H1 (cell line): ENCODE measurements at regions of chr9 and their contacts with region 1.

Region 1: GRCh38 chr9:129006328-129007034 is 21.6 kb downstream of the SH3GLB2 start:
- DNase-seq: peak; percentile 64 to 74
- H3K4me3 ChIP-seq: no peak overlapping the region
- H3K27ac ChIP-seq: no peak overlapping the region
- H3K4me1 ChIP-seq: no peaks in the 10 kb centered on the region
- H3K27me3 ChIP-seq: no peaks in the 10 kb centered on the region
- CTCF ChIP-seq: peak in 2 of 3 experiments; percentile 96 to 98; a peak in 3 of 4 replicates
- EP300 ChIP-seq: no peak
- POLR2A ChIP-seq: peak in 1 of 2 experiments; percentile 32; a peak in 1 of 3 replicates
- RAD21 ChIP-seq: peak; percentile 54 to 61

Region 2: GRCh38 chr9:128992995-128993394 is 13.5 kb before region 1 on chr9:
- CTCF ChIA-PET with region 1: interaction called, 67 read pairs
- POLR2A ChIA-PET with region 1: interaction called, 11 read pairs
- DNase-seq: no peak
- H3K4me3 ChIP-seq: no peak overlapping the region
- H3K27ac ChIP-seq: no peak overlapping the region
- H3K4me1 ChIP-seq: no peaks in the 10 kb centered on the region
- H3K27me3 ChIP-seq: no peaks in the 10 kb centered on the region
- CTCF ChIP-seq: peak; percentile 29 to 50 (median 37); a peak in 2 of 4 replicates
- EP300 ChIP-seq: no peak
- POLR2A ChIP-seq: no peak
- RAD21 ChIP-seq: peak in 1 of 2 experiments; percentile 43; a peak in 2 of 4 replicates

Region 3: GRCh38 chr9:129023036-129023907 is 16.8 kb after region 1 on chr9:
- CTCF ChIA-PET with region 1: interaction called, 89 read pairs
- POLR2A ChIA-PET with region 1: interaction called, 12 read pairs
- DNase-seq: no peak
- H3K4me3 ChIP-seq: no peak overlapping the region
- H3K27ac ChIP-seq: no peak overlapping the region
- H3K4me1 ChIP-seq: peaks cover 0 to 18% (median 11%) of the 10 kb centered on the region in 4 experiments; a peak in 6 of 7 replicates
- H3K27me3 ChIP-seq: no peaks in the 10 kb centered on the region
- CTCF ChIP-seq: no peak
- EP300 ChIP-seq: no peak
- POLR2A ChIP-seq: no peak
- RAD21 ChIP-seq: no peak

Region 4: GRCh38 chr9:129028192-129028957 is 21.9 kb after region 1 on chr9 and contains the start of gene SH3GLB2:
- CTCF ChIA-PET with region 1: interaction called, 89 read pairs
- POLR2A ChIA-PET with region 1: interaction called, 10 read pairs
- DNase-seq: peak; percentile 89 to 99
- H3K4me3 ChIP-seq: peak within 1 kb of the TSS; percentile 61 to 75 (median 65)
- H3K27ac ChIP-seq: 0 out of 2 replicates have a peak within 1 kb of the TSS, but pooled peaks have one; percentile 40
- H3K4me1 ChIP-seq: peaks cover 0 to 18% (median 11%) of the 10 kb centered on the region in 4 experiments; a peak in 6 of 7 replicates
- H3K27me3 ChIP-seq: no peaks in the 10 kb centered on the region
- CTCF ChIP-seq: peak; percentile 64 to 86 (median 70)
- EP300 ChIP-seq: no peak
- POLR2A ChIP-seq: no peak
- RAD21 ChIP-seq: peak; percentile 29 to 45; a peak in 3 of 4 replicates
- total RNA-seq, gene SH3GLB2: 52.7 and 54.9 TPM in 2 replicates

Region 5: GRCh38 chr9:129036923-129037766 is 30.7 kb after region 1 on chr9:
- CTCF ChIA-PET with region 1: interaction called, 12 read pairs
- POLR2A ChIA-PET with region 1: no interaction called
- DNase-seq: no peak
- H3K4me3 ChIP-seq: peak overlapping the region; percentile 87 to 97 (median 90)
- H3K27ac ChIP-seq: no peak overlapping the region
- H3K4me1 ChIP-seq: peaks cover 0 to 10% (median 5%) of the 10 kb centered on the region in 4 experiments; a peak in 5 of 7 replicates
- H3K27me3 ChIP-seq: no peaks in the 10 kb centered on the region
- CTCF ChIP-seq: peak in 1 of 3 experiments; percentile 4; a peak in 1 of 4 replicates
- EP300 ChIP-seq: no peak
- POLR2A ChIP-seq: no peak
- RAD21 ChIP-seq: no peak

Region 6: GRCh38 chr9:129278391-129279237 is 272.1 kb after region 1 on chr9:
- CTCF ChIA-PET with region 1: no interaction called
- POLR2A ChIA-PET with region 1: no interaction called
- DNase-seq: peak in 1 of 2 experiments; percentile 73
- H3K4me3 ChIP-seq: peak overlapping the region in 1 of 4 experiments; percentile 12; a peak in 2 of 8 replicates
- H3K27ac ChIP-seq: no peak overlapping the region
- H3K4me1 ChIP-seq: peaks cover 4 to 37% (median 18%) of the 10 kb centered on the region in 4 experiments
- H3K27me3 ChIP-seq: peaks cover 0 to 2% (median 0%) of the 10 kb centered on the region in 4 experiments; a peak in 3 of 7 replicates
- CTCF ChIP-seq: no peak
- EP300 ChIP-seq: no peak
- POLR2A ChIP-seq: no peak
- RAD21 ChIP-seq: no peak